ENCODE measurements at regions of chr5 and their contacts with region 1.

Region 1: DNA sequence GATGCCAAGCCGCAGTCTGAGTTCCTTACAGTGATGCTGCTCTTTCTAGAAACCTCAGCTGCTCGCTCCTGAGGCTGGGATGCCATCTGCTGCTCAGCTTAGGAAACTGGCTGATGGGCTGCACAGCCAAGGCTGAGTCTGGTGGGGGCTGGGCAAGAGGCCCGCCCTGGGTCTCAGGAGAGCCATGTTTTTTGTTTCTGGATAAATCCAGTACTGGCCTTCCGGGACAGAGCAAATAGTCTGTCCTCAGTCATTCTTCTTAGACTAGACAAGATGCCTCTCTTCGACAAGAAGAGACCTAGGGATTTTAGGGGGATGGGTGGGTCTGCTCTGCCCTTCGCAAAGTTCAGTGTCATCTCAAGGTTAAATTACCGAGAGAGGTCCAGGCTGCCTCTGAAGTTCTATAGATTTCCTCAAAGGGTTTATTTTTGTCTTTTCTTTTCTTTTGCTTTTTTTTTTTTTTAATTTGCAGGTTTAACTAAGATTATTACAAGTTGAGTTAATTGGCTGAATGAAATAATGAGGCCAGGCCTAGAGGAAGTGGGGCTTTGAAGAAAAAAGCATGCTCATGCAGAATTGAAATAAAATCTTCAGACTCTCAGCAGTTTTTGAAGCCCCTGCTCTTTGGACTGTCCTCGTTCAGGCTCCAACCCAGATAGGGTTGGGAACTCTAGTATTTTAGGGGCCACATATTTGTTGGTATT is 30.6 kb upstream of the MATR3 start:
- DNase-seq: peak; percentile 84
- ATAC-seq: peak; percentile 99

Region 2: DNA sequence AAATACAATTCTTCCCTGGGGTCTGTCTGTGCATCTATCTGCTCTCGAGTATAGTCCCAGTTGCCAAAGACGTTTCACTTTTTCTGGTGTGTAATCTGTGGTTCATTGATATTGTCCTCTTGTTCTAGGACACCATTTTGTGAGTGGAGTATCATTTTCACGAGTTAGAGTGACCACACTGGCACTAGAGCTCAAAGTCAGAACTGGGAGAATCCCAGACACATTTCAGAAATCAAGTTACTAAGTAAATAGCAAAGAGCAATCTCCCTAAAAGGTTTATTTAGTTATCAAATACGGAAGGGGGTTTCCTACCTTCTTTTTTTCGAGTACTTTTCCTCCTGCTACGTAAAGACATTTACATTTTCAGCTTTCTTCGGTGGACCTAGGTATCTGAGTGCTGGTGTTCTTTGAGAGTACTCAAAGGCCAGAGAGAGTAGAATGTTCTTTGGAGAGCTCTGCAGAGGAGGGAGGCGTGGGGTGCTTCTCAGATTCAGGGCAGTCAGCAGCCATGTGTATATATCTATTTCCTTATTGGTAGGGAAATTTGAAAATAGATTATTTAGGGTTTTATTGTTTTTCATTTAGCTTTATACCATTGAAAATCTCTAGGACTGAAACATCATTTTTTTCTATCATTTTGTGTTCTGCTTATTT is 678.8 kb before region 1 on chr5:
- intact Hi-C with region 1: loop called in 1 of 2 experiments (anchors 10 kb)
- DNase-seq: no peak
- ATAC-seq: peak; percentile 53

Region 3: GRCh38 chr5:139091439-139092156 is 171.3 kb before region 1 on chr5:
- intact Hi-C with region 1: loop called in 1 of 2 experiments (anchors 5 kb)
- DNase-seq: no peak
- ATAC-seq: peak; percentile 96

Measured in left colon (tissue), 2 donors.